CD4-positive, alpha-beta memory T cell (primary cell): ENCODE measurements at regions of chr9 and their contacts with region 1.

Region 1: DNA sequence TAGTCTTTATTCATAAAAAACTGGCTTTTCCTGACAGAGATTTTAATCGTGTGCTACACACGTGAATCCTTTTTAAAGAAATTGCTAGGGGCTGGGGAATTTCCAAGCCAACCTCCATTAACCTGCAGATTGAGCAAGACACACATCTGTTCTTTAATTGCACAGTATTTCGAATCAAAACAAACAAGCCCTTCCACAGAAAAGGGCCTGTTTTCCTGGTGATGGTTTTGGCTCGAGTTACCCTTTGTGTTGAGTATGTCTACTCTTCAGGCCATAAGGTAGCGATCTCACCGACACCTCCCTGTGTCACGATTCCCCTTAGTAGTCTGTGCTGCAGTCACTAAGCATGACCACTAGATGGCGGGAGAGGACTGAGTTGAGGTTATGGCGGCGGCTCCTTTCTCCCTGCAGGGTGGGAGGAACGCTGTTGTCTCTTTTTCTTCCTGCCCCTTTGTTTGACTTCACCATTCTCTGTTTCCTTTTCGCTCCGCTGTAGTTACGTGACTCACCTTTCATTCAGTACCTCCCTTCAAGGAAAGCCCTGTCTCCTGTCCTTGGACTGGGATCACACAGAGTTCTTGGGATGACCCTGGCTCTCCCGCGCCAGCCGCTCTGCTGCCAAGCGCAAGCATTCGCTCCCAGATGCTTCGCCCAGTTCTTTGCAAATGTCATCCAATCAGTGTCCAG is 137.1 kb upstream of the SLC24A2 start:
- DNase-seq: peak; percentile 77 to 82 (median 79)
- H3K4me3 ChIP-seq: peak overlapping the region in 1 of 2 donors; percentile 27
- H3K4me3 Mint-ChIP-seq: peak overlapping the region; percentile 60 to 81 (median 76)
- H3K27ac ChIP-seq: no peak overlapping the region
- H3K27ac Mint-ChIP-seq: peak overlapping the region in 1 of 7 donors; percentile 21
- H3K4me1 ChIP-seq: peaks cover 8% of the 10 kb centered on the region
- H3K4me1 Mint-ChIP-seq: peaks cover 0 to 7% (median 5%) of the 10 kb centered on the region in 4 donors
- H3K27me3 ChIP-seq: no peaks in the 10 kb centered on the region
- H3K27me3 Mint-ChIP-seq: peaks cover 0 to 10% of the 10 kb centered on the region in 2 donors

Region 2: DNA sequence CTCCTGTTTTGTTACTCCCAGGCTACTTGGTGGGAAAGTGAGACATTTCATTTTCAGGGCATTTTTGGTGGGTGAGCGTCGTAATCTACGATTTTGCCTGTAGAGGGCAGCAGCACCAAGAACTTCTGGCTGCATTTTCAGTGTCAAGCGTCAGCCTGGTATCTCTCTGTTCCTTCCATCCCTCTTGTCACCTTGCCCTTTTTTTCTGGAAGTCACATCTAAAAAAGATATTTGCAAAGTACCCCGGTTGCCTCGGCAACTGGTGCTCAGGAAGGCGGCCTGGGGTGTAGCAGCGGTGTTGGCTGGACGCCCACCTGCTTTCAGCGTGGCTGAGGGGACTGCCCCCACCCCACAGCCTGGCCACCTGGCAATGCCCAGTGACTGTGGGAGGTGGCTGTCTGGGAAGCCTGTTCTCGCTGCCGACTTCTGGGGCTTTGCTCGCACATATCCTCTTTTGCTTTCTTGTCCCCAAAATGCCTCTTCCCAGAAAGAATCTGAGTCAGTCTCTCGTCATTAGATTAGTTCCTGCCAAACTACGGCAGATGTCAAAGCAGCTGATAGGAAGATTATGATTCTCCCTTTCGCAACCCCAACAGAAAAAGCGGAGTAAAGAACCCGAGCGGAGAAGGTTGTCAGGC is 432.7 kb before region 1 on chr9:
- CTCF ChIA-PET with region 1: no interaction called
- POLR2A ChIA-PET with region 1: no interaction called
- intact Hi-C with region 1: loop called (anchors 10 kb)
- DNase-seq: peak in 4 of 5 donors; percentile 17 to 32 (median 28)
- H3K4me3 ChIP-seq: no peak overlapping the region
- H3K4me3 Mint-ChIP-seq: peak overlapping the region; percentile 8 to 73 (median 36)
- H3K27ac ChIP-seq: no peak overlapping the region
- H3K27ac Mint-ChIP-seq: peak overlapping the region in 1 of 7 donors; percentile 66
- H3K4me1 ChIP-seq: peaks cover 7% of the 10 kb centered on the region
- H3K4me1 Mint-ChIP-seq: peaks cover 6 to 14% (median 12%) of the 10 kb centered on the region in 4 donors
- H3K27me3 ChIP-seq: no peaks in the 10 kb centered on the region
- H3K27me3 Mint-ChIP-seq: peaks cover 4 to 12% of the 10 kb centered on the region in 2 donors

Region 3: DNA sequence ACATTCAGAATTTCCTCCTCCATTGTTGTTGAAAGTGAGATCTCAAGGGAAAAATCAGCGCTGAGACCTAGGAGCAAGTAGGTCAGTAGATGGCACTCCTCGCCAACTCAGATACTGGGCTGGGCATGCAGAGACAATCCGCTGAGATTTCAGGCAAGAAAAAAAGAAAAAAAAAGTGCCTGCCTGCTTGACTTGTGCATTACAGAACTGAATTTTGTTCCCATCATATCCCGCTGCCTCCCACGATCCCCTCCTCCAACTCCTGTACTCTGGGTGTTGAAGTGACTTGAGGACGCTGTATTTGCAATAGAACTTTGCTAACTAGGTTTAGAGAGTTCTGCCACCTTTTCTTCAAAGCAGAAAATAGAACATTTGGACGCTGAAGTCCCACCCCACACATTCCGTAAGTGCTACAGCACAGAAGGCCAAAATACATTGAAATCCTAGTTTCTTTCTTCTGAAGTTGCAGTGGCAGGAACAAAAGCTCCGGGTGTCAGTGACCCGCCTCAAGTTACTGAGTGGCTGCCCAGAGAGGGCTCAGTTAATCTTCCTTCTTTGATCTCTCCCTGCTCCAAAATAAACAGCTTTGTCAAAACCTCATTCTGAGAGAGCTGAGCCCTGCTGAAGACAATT is 430.6 kb after region 1 on chr9:
- CTCF ChIA-PET with region 1: no interaction called
- POLR2A ChIA-PET with region 1: no interaction called
- intact Hi-C with region 1: loop called (anchors 1 kb)
- DNase-seq: peak; percentile 34 to 51 (median 42)
- H3K4me3 ChIP-seq: no peak overlapping the region
- H3K4me3 Mint-ChIP-seq: no peak overlapping the region
- H3K27ac ChIP-seq: no peak overlapping the region
- H3K27ac Mint-ChIP-seq: peak overlapping the region in 5 of 7 donors; percentile 5 to 82 (median 68)
- H3K4me1 ChIP-seq: peaks cover 9% of the 10 kb centered on the region
- H3K4me1 Mint-ChIP-seq: peaks cover 13 to 55% (median 24%) of the 10 kb centered on the region in 4 donors
- H3K27me3 ChIP-seq: no peaks in the 10 kb centered on the region
- H3K27me3 Mint-ChIP-seq: no peaks in the 10 kb centered on the region

Region 4: DNA sequence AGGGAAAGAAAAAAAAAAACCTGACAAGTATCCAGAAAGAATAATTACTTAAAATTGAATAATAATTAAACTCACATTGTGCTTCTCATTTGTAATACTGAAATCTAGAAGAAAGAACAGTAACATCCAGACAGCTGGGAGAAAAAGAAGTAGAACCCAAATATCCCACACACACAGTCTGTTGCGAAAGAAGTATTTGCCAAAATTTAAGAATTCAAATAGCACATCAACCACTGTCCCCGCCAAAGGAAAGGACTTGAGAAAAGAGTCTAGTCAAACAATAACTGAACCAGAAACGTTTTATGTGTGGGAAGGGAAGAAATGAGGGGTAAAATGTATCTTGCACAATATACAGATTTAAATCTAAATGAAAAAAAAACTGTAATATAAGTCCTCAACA is 493.6 kb after region 1 on chr9:
- CTCF ChIA-PET with region 1: no interaction called
- POLR2A ChIA-PET with region 1: interaction called, 3 read pairs
- intact Hi-C with region 1: loop called (anchors 10 kb)
- DNase-seq: no peak
- H3K4me3 ChIP-seq: no peak overlapping the region
- H3K4me3 Mint-ChIP-seq: no peak overlapping the region
- H3K27ac ChIP-seq: no peak overlapping the region
- H3K27ac Mint-ChIP-seq: no peak overlapping the region
- H3K4me1 ChIP-seq: no peaks in the 10 kb centered on the region
- H3K4me1 Mint-ChIP-seq: peaks cover 5 to 24% (median 22%) of the 10 kb centered on the region in 4 donors
- H3K27me3 ChIP-seq: no peaks in the 10 kb centered on the region
- H3K27me3 Mint-ChIP-seq: no peaks in the 10 kb centered on the region

Region 5: DNA sequence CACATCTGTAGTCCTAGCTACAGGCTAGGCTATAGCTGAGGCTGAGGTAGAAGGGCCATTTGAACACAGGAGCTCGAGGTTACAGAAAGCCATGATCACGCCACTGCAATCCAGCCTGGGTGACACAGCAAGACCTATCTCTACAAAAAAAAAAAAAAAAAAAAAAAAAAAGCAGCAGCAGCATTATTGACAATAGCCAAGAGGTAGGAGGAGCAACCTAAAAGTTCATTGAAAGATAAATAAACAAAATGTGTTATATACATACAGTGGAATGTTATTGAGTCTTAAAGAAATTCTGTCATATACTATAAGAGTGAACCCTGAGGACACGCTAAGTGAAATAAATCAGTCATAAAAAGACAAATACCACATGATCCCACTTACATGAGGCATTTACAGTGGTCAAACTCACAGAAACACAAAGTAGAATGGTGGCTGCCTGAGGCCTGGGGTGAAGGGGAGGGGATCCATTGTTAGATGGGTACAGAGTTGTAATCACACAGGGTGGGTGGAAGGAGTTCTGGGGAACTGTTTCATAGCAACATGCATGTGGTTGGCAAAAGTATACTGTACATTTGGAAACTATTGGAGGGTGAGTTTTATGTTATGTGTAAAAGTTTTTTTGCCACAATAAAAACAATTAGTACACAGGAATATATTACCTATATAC is 619.1 kb after region 1 on chr9:
- CTCF ChIA-PET with region 1: interaction called, 10 read pairs
- POLR2A ChIA-PET with region 1: no interaction called
- intact Hi-C with region 1: no loop called
- DNase-seq: no peak
- H3K4me3 ChIP-seq: no peak overlapping the region
- H3K4me3 Mint-ChIP-seq: no peak overlapping the region
- H3K27ac ChIP-seq: no peak overlapping the region
- H3K27ac Mint-ChIP-seq: no peak overlapping the region
- H3K4me1 ChIP-seq: no peaks in the 10 kb centered on the region
- H3K4me1 Mint-ChIP-seq: peaks cover 20 to 28% (median 26%) of the 10 kb centered on the region in 4 donors
- H3K27me3 ChIP-seq: no peaks in the 10 kb centered on the region
- H3K27me3 Mint-ChIP-seq: no peaks in the 10 kb centered on the region

Region 6: GRCh38 chr9:20684035-20684872 is 758.3 kb after region 1 on chr9 and contains the start of gene FOCAD:
- CTCF ChIA-PET with region 1: no interaction called
- POLR2A ChIA-PET with region 1: no interaction called
- intact Hi-C with region 1: loop called (anchors 10 kb)
- DNase-seq: peak; percentile 94 to 96 (median 96)
- H3K4me3 ChIP-seq: peak within 1 kb of the TSS; percentile 86 to 96
- H3K4me3 Mint-ChIP-seq: peak within 1 kb of the TSS; percentile 90 to 96 (median 94)
- H3K27ac ChIP-seq: peak within 1 kb of the TSS; percentile 80
- H3K27ac Mint-ChIP-seq: peak within 1 kb of the TSS; percentile 83 to 95 (median 90)
- H3K4me1 ChIP-seq: peaks cover 22% of the 10 kb centered on the region
- H3K4me1 Mint-ChIP-seq: peaks cover 11 to 20% (median 16%) of the 10 kb centered on the region in 4 donors
- H3K27me3 ChIP-seq: no peaks in the 10 kb centered on the region
- H3K27me3 Mint-ChIP-seq: no peaks in the 10 kb centered on the region
- total RNA-seq, gene FOCAD: 18.8 to 20.6 TPM

Region 7: DNA sequence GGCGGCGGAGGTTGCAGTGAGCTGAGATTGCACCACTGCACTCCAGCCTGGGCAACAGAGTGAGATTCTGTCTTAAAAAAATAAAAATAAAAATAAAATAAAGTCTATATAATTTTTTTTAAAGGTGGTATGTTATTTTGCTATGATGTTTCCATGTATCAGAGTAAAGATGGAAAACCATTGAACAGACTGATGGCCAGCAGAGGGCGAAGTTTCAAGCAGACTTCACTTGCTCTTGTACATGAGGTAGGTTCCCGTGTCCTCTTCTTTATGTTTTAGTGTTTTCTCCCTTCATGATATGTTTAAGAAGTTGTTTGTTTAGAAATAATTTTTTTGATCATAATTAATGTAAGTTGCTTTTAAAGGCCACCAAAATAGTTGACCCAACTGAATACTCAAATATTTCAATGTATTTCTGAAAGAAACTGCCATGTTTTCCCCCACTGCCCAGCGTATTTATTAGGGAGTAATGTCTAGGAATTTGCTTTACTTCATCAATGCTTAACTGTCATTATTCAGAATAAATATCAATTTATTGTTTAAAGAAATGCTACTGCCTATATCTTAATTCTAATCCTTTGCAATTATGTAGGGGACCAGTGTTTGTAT is 959.1 kb after region 1 on chr9:
- CTCF ChIA-PET with region 1: interaction called, 13 read pairs
- POLR2A ChIA-PET with region 1: no interaction called
- intact Hi-C with region 1: loop called (anchors 1 kb)
- DNase-seq: peak; percentile 43 to 57 (median 50)
- H3K4me3 ChIP-seq: no peak overlapping the region
- H3K4me3 Mint-ChIP-seq: no peak overlapping the region
- H3K27ac ChIP-seq: no peak overlapping the region
- H3K27ac Mint-ChIP-seq: no peak overlapping the region
- H3K4me1 ChIP-seq: no peaks in the 10 kb centered on the region
- H3K4me1 Mint-ChIP-seq: no peaks in the 10 kb centered on the region
- H3K27me3 ChIP-seq: no peaks in the 10 kb centered on the region
- H3K27me3 Mint-ChIP-seq: no peaks in the 10 kb centered on the region